Motor neuron (in vitro differentiated cells): ENCODE measurements at regions of chr15 and their contacts with region 1.

Region 1: GRCh38 chr15:34708422-34708821 is 46.4 kb downstream of the GJD2 start:
- ATAC-seq: peak; percentile 76 to 97 (median 83)
- H3K4me3 ChIP-seq: no peak overlapping the region
- H3K27ac ChIP-seq: no peak overlapping the region
- H3K4me1 ChIP-seq: no peaks in the 10 kb centered on the region

Region 2: DNA sequence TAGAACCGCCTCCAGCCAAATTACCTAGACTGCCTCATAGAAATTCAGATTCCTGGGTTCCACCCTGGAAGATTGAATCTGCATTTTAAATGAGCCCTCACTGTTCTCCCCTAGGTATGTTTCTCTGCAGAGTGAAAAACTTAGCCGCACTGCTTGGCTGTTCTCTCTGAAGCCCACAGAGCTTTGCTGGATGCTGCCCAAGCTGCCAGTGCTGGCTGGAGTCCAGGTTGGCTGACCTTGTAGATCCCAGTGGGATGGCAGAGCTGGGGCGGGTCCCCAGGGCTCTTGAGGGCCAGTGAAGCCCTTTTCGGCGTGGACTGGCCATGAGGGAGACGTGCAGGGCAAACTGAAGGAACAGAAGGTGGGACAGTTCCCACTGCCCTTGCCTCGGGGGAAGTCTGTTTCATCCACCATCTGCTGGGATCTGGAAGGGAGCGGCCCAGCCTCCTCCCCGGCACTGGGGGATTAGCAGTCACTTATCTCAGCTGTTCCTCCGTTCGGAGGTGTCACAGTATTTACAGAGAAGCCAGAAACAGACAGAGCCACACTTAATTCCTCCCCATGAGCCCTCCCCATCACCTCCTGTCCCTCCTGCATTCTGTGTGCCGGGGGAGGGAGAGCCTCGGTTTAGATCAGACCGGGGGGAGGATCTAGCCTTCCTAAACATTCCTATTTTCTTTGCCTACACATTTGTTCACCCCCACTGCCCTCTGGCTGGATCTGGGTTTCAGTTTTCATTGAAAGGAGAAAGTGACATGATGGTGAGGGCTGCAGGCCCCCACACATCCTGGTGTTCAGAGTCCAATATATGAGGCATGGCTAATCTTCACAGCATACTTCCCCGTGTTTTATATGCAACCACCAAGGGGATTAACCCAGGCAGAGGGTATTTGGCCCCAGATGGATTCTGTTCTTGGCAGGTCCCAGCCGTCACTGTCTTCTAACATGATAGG is 91.0 kb after region 1 on chr15:
- in situ Hi-C with region 1: loop called in 1 of 9 experiments (anchors 25 kb)
- ATAC-seq: peak in 3 of 8 experiments; percentile 57 to 85 (median 67)
- H3K4me3 ChIP-seq: no peak overlapping the region
- H3K27ac ChIP-seq: no peak overlapping the region
- H3K4me1 ChIP-seq: peaks cover 0 to 5% of the 10 kb centered on the region in 2 donors

Region 3: GRCh38 chr15:34900748-34901147 is 192.3 kb after region 1 on chr15:
- in situ Hi-C with region 1: loop called in 3 of 9 experiments (anchors 25 kb)
- ATAC-seq: no peak
- H3K4me3 ChIP-seq: no peak overlapping the region
- H3K27ac ChIP-seq: no peak overlapping the region
- H3K4me1 ChIP-seq: no peaks in the 10 kb centered on the region

Region 4: DNA sequence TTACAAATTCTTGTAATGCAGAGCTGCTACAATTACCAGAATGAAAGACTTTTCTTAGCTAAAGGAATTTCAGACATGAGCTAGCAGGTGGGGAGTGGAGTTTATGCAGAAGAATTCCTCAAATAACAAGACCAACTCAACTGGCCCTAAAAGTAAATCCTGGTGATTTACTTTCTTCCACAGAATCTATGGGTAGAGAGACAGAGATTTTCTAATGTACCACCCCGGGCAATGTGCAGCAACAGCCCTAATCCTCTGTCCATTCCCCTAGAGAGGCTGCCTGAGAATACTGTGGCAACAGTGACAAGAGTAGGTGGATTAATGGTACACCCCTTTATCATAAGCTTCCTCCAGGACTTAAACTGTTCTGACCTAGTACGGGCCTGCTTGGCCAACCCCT is 205.9 kb after region 1 on chr15:
- in situ Hi-C with region 1: loop called in 4 of 9 experiments (anchors 10 to 25 kb)
- ATAC-seq: peak in 1 of 8 experiments; percentile 52
- H3K4me3 ChIP-seq: no peak overlapping the region
- H3K27ac ChIP-seq: no peak overlapping the region
- H3K4me1 ChIP-seq: no peaks in the 10 kb centered on the region

Region 5: GRCh38 chr15:34927726-34928125 is 219.3 kb after region 1 on chr15:
- in situ Hi-C with region 1: loop called in 4 of 9 experiments (anchors 10 to 25 kb)
- ATAC-seq: peak in 3 of 8 experiments; percentile 28 to 88 (median 53)
- H3K4me3 ChIP-seq: no peak overlapping the region
- H3K27ac ChIP-seq: no peak overlapping the region
- H3K4me1 ChIP-seq: no peaks in the 10 kb centered on the region